Posterior vena cava (tissue), 2 donors: ENCODE measurements at regions of chr7 and their contacts with region 1.

Region 1: GRCh38 chr7:133997463-133997862 is 129.7 kb upstream of the LRGUK start:
- DNase-seq: no peak

Region 2: GRCh38 chr7:133961724-133962123 is 35.7 kb before region 1 on chr7:
- intact Hi-C with region 1: loop called in 1 of 2 experiments (anchors 2 kb)
- DNase-seq: no peak

Region 3: DNA sequence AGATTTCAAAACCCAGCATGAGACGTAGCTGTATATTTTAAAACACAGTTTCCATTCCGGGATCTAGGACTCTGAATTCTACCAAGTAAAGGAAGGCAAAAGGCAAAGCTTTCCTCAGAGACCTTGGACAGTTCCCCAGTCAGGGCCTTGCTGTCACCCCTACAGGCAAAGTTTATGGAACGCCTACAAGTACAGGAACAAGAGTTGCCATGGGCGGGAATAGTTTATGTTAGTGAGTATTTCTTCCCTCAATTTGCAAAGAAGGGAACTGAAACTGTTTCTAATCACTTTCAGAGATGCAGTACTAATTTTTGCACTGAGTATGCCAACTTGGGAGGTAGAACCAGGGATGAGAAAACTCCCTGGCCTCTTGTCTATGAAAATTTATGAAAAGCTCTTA is 61.5 kb after region 1 on chr7:
- intact Hi-C with region 1: no loop called
- DNase-seq: no peak